B cell (primary cell): ENCODE measurements at regions of chr14 and their contacts with region 1.

Region 1: DNA sequence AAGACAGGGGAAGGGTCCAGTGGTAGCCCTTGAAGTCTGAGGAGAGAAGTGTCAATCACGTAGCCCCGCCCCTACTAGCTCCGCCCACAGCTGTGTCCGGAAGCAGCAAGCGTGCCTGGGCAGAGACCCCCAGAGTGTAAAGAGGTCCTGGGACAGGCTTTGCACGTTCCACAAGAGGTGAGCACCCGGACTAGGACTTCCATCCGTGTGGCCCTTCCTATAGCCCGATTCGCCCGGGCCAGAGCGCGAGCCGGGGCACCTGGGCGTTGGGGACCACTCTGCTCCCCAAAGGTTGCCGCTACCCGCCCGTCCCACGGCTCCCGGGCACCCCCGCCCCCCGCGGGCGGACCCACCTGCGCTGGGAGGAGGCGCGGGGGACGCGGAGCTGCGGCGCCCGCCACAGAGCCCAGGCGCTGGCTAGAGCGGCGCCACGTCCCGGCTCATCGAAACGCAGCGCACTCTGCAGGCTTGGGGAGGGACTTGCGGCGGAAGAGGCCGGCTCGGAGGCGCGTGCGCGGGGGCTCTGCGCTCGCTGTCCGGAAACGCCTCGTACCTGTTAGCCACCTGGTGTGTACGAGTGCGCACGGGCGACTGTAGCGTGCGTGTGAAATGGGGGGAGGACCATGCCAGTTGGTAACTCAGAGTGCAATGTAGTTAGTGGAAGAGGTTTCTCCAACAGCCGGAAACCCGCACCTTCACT is at the start of gene RABGGTA:
- DNase-seq: peak; percentile 98
- ATAC-seq: peak; percentile 87
- H3K4me3 ChIP-seq: peak within 1 kb of the TSS; percentile 45 to 96 (median 93)
- H3K4me3 Mint-ChIP-seq: peak within 1 kb of the TSS; percentile 94
- H3K27ac ChIP-seq: peak within 1 kb of the TSS; percentile 93 to 97
- H3K27ac Mint-ChIP-seq: peak within 1 kb of the TSS; percentile 94
- H3K4me1 ChIP-seq: peaks cover 32 to 39% of the 10 kb centered on the region in 2 donors
- H3K4me1 Mint-ChIP-seq: peaks cover 48% of the 10 kb centered on the region
- H3K27me3 ChIP-seq: no peaks in the 10 kb centered on the region
- H3K27me3 Mint-ChIP-seq: no peaks in the 10 kb centered on the region
- CTCF ChIP-seq: peak; percentile 75
- total RNA-seq, gene RABGGTA: 57.9 and 70.1 TPM in 2 replicates

Region 2: GRCh38 chr14:23561259-23561658 is 710.0 kb before region 1 on chr14:
- CTCF ChIA-PET with region 1: no interaction called
- POLR2A ChIA-PET with region 1: interaction called, 12 read pairs
- intact Hi-C with region 1: no loop called
- DNase-seq: no peak
- ATAC-seq: no peak
- H3K4me3 ChIP-seq: no peak overlapping the region
- H3K4me3 Mint-ChIP-seq: no peak overlapping the region
- H3K27ac ChIP-seq: no peak overlapping the region
- H3K27ac Mint-ChIP-seq: no peak overlapping the region
- H3K4me1 ChIP-seq: peaks cover 16 to 25% of the 10 kb centered on the region in 2 donors
- H3K4me1 Mint-ChIP-seq: peaks cover 44% of the 10 kb centered on the region
- H3K27me3 ChIP-seq: no peaks in the 10 kb centered on the region
- H3K27me3 Mint-ChIP-seq: no peaks in the 10 kb centered on the region
- CTCF ChIP-seq: no peak

Region 3: GRCh38 chr14:24195191-24196070 is 75.9 kb before region 1 on chr14 and contains the start of gene TM9SF1:
- CTCF ChIA-PET with region 1: interaction called, 3 read pairs
- POLR2A ChIA-PET with region 1: interaction called, 10 read pairs
- intact Hi-C with region 1: loop called (anchors 2 kb)
- DNase-seq: peak; percentile 96
- ATAC-seq: peak; percentile 90
- H3K4me3 ChIP-seq: peak within 1 kb of the TSS; percentile 82 to 99 (median 83)
- H3K4me3 Mint-ChIP-seq: peak within 1 kb of the TSS; percentile 89
- H3K27ac ChIP-seq: peak within 1 kb of the TSS; percentile 98 to 99
- H3K27ac Mint-ChIP-seq: peak within 1 kb of the TSS; percentile 99
- H3K4me1 ChIP-seq: peaks cover 25 to 26% of the 10 kb centered on the region in 2 donors
- H3K4me1 Mint-ChIP-seq: peaks cover 49% of the 10 kb centered on the region
- H3K27me3 ChIP-seq: no peaks in the 10 kb centered on the region
- H3K27me3 Mint-ChIP-seq: no peaks in the 10 kb centered on the region
- CTCF ChIP-seq: no peak
- total RNA-seq, gene TM9SF1: 24.5 and 33.9 TPM in 2 replicates

Region 4: DNA sequence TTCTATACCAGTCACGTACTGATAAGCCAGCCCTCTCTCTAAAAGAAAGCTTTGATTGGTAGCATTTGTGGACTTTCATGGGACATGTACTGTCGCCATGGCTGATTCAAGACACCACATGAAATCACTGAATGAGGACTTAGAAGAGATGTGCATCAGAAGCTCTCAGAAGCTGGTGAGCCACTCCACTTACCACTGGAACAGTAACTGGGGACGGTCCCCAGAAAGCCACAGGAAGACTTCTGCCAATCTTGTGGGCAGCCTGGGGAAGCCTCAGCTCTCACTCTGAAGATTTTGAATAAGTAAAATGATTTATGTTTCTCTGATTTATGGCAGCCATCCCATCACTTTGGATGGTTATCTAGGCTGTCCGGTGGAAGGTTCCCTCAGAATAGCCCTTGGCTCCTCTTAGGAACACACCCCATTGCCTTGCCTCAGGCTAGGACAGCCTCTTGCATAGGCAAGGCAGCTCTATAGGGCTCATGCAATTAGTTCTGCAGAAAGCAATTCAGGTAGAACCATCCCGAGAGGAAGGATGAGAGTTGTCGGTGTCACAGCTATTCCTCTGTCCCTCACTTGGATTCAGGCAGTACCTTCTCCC is 18.5 kb after region 1 on chr14:
- CTCF ChIA-PET with region 1: interaction called, 18 read pairs
- POLR2A ChIA-PET with region 1: interaction called, 11 read pairs
- intact Hi-C with region 1: no loop called
- DNase-seq: peak; percentile 56
- ATAC-seq: peak; percentile 87
- H3K4me3 ChIP-seq: no peak overlapping the region
- H3K4me3 Mint-ChIP-seq: peak overlapping the region; percentile 34
- H3K27ac ChIP-seq: no peak overlapping the region
- H3K27ac Mint-ChIP-seq: peak overlapping the region; percentile 41
- H3K4me1 ChIP-seq: peaks cover 10 to 18% of the 10 kb centered on the region in 2 donors
- H3K4me1 Mint-ChIP-seq: peaks cover 12% of the 10 kb centered on the region
- H3K27me3 ChIP-seq: no peaks in the 10 kb centered on the region
- H3K27me3 Mint-ChIP-seq: no peaks in the 10 kb centered on the region
- CTCF ChIP-seq: no peak

Region 5: DNA sequence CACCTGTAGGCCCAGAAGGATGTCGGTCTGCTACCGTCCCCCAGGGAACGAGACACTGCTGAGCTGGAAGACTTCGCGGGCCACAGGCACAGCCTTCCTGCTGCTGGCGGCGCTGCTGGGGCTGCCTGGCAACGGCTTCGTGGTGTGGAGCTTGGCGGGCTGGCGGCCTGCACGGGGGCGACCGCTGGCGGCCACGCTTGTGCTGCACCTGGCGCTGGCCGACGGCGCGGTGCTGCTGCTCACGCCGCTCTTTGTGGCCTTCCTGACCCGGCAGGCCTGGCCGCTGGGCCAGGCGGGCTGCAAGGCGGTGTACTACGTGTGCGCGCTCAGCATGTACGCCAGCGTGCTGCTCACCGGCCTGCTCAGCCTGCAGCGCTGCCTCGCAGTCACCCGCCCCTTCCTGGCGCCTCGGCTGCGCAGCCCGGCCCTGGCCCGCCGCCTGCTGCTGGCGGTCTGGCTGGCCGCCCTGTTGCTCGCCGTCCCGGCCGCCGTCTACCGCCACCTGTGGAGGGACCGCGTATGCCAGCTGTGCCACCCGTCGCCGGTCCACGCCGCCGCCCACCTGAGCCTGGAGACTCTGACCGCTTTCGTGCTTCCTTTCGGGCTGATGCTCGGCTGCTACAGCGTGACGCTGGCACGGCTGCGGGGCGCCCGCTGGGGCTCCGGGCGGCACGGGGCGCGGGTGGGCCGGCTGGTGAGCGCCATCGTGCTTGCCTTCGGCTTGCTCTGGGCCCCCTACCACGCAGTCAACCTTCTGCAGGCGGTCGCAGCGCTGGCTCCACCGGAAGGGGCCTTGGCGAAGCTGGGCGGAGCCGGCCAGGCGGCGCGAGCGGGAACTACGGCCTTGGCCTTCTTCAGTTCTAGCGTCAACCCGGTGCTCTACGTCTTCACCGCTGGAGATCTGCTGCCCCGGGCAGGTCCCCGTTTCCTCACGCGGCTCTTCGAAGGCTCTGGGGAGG is 39.6 kb after region 1 on chr14 and contains the start of gene LTB4R:
- CTCF ChIA-PET with region 1: interaction called, 39 read pairs
- POLR2A ChIA-PET with region 1: interaction called, 5 read pairs
- intact Hi-C with region 1: loop called (anchors 1 kb)
- DNase-seq: peak; percentile 90
- ATAC-seq: peak; percentile 76
- H3K4me3 ChIP-seq: peak within 1 kb of the TSS; percentile 8 to 71 (median 57)
- H3K4me3 Mint-ChIP-seq: peak within 1 kb of the TSS; percentile 84
- H3K27ac ChIP-seq: peak within 1 kb of the TSS; percentile 65 to 83
- H3K27ac Mint-ChIP-seq: peak within 1 kb of the TSS; percentile 91
- H3K4me1 ChIP-seq: peaks cover 38 to 57% of the 10 kb centered on the region in 2 donors
- H3K4me1 Mint-ChIP-seq: peaks cover 61% of the 10 kb centered on the region
- H3K27me3 ChIP-seq: no peaks in the 10 kb centered on the region
- H3K27me3 Mint-ChIP-seq: no peaks in the 10 kb centered on the region
- CTCF ChIP-seq: peak; percentile 67
- total RNA-seq, gene LTB4R: 8.8 and 9.2 TPM in 2 replicates